Heart left ventricle (tissue), 16 donors: ENCODE measurements at regions of chr1 and their contacts with region 1.

Region 1: DNA sequence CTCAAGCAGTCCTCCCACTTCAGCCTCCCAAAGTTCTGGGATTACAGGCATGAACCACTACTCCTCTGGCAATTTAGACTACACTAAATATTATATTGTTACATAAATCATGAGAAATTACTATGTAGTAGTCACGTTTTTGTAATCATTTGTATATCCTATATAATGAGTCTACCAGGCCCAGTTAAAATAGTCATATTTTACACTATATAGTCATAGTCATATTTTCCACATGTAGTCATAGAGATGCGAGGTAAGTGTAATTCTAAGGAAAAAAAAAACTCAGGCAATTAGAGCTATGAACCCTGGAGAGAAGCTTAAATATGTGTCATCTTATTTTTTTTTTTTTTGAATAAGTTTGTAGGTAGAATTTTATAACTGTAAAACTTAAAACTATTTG is 90.0 kb downstream of the FNBP1L start:
- DNase-seq: no peak
- ATAC-seq: no peak
- H3K4me3 ChIP-seq: no peak overlapping the region
- H3K27ac ChIP-seq: no peak overlapping the region
- H3K4me1 ChIP-seq: peaks cover 0 to 9% (median 0%) of the 10 kb centered on the region in 12 donors
- H3K27me3 ChIP-seq: no peaks in the 10 kb centered on the region
- CTCF ChIP-seq: no peak
- POLR2A ChIP-seq: no peak

Region 2: DNA sequence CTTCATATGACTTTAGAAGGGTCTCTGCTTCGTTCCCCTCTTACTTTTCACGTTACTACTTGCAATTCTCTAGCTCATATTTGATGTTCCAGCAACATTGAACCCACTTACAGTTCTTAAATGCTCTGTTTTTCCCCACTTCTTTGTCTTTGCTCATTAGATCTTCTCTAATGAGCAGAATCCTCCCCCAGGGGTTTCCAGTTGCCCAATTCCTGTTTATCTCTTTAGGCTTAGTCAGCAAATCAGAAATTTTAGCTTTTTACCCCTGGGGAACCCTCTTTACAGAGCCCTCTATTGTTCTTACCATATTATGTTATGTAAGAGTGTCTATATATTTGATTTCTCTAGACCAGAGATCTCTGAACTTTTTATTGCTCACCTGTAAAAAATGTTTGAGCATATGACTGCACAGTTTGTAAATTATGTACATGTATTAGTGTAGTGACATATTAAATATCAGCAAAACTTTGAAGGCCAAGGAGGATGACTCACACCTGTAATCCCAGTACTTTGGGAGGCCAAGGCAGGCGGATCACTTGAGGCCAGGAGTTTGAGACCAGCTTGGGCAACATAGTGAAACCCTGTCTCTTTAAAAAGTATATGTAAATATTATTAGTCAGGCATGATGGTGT is 18.6 kb before region 1 on chr1:
- intact Hi-C with region 1: no loop called
- DNase-seq: no peak
- ATAC-seq: no peak
- H3K4me3 ChIP-seq: no peak overlapping the region
- H3K27ac ChIP-seq: no peak overlapping the region
- H3K4me1 ChIP-seq: no peaks in the 10 kb centered on the region
- H3K27me3 ChIP-seq: no peaks in the 10 kb centered on the region
- CTCF ChIP-seq: no peak
- POLR2A ChIP-seq: no peak

Region 3: DNA sequence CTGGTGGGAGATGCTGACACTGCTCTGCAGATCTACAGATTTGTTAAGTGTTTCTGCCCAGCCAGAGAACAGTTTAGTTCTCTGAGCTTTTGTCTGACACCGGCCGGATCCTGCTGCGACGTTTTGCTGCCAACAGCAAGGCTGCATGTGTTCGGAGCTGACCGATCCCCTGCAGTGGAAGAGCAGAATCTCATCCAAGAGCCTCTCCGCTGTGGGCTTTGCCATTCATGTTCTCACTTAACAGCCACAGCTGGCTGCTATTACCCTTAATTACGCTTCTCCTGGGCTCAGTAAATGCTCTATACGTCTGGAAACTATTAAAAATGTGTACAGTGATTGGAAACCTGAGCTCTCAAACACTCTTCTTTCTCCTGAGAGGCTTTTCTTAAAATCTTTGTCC is 38.4 kb after region 1 on chr1:
- intact Hi-C with region 1: loop called in 1 of 10 experiments (anchors 2 kb)
- DNase-seq: peak in 1 of 5 donors; percentile 43
- ATAC-seq: peak in 3 of 4 donors; percentile 32 to 59 (median 42)
- H3K4me3 ChIP-seq: no peak overlapping the region
- H3K27ac ChIP-seq: peak overlapping the region in 6 of 12 donors; percentile 26 to 73 (median 45)
- H3K4me1 ChIP-seq: peaks cover 0 to 61% (median 26%) of the 10 kb centered on the region in 12 donors
- H3K27me3 ChIP-seq: no peaks in the 10 kb centered on the region
- CTCF ChIP-seq: no peak
- POLR2A ChIP-seq: no peak

Region 4: GRCh38 chr1:93749894-93750301 is 212.0 kb after region 1 on chr1:
- intact Hi-C with region 1: no loop called
- DNase-seq: no peak
- ATAC-seq: no peak
- H3K4me3 ChIP-seq: no peak overlapping the region
- H3K27ac ChIP-seq: peak overlapping the region in 1 of 12 donors; percentile 27
- H3K4me1 ChIP-seq: peaks cover 0 to 41% (median 21%) of the 10 kb centered on the region in 12 donors
- H3K27me3 ChIP-seq: peaks cover 0 to 10% (median 0%) of the 10 kb centered on the region in 9 donors
- CTCF ChIP-seq: peak in 2 of 12 donors; percentile 14 to 28
- POLR2A ChIP-seq: no peak